ENCODE measurements at regions of chr7 and their contacts with region 1.

Region 1: DNA sequence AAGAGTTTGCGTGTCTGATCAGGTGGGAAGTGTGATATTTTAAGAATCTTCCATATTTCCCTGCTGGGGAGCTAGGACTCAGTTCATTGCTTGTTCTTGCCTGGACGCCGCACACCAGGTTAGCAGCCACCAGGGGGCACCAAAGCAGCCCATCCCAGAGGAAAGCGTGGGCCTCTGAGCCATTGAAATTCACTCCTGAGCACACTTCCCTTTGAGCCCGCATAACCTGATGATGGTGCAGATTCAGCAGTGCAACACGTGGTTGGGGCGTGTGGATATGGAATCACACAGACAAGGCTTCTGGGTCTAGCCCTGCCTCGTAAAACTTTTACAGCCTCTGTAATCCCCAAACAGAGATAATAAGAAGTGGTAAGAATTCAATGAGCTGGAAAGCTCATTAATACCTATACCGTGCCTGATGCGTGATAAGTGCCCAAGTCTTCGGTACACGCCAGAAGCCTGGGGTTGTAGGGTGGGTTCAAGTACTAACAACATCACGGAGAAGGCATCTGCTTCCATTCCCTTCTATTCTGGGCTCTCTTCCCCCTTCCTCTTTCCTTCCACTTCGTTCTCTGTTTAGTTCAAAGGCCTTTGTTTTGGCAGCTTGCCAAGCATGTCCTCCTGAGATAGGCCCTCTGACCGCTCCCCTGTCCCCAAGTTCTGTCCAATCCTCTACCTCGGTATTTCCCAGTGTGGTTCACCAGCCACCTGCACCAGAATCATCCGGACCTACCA is 130.1 kb upstream of the KMT2E start:
- DNase-seq: peak; percentile 43 to 79 (median 58)
- ATAC-seq: peak; percentile 92
- H3K4me3 ChIP-seq: no peak overlapping the region
- H3K4me3 Mint-ChIP-seq: peak overlapping the region in 4 of 10 donors; percentile 3 to 56 (median 34)
- H3K27ac ChIP-seq: no peak overlapping the region
- H3K27ac Mint-ChIP-seq: peak overlapping the region in 2 of 9 donors; percentile 12 to 39
- H3K4me1 ChIP-seq: no peaks in the 10 kb centered on the region
- H3K4me1 Mint-ChIP-seq: peaks cover 0 to 18% (median 5%) of the 10 kb centered on the region in 7 donors
- H3K27me3 ChIP-seq: no peaks in the 10 kb centered on the region
- H3K27me3 Mint-ChIP-seq: peaks cover 0 to 11% (median 0%) of the 10 kb centered on the region in 5 donors

Region 2: GRCh38 chr7:104895522-104896236 is 11.8 kb after region 1 on chr7:
- CTCF ChIA-PET with region 1: interaction called, 14 read pairs
- POLR2A ChIA-PET with region 1: no interaction called
- intact Hi-C with region 1: no loop called
- DNase-seq: no peak
- ATAC-seq: no peak
- H3K4me3 ChIP-seq: no peak overlapping the region
- H3K4me3 Mint-ChIP-seq: no peak overlapping the region
- H3K27ac ChIP-seq: no peak overlapping the region
- H3K27ac Mint-ChIP-seq: peak overlapping the region in 1 of 9 donors; percentile 14
- H3K4me1 ChIP-seq: no peaks in the 10 kb centered on the region
- H3K4me1 Mint-ChIP-seq: peaks cover 4 to 11% (median 7%) of the 10 kb centered on the region in 7 donors
- H3K27me3 ChIP-seq: no peaks in the 10 kb centered on the region
- H3K27me3 Mint-ChIP-seq: peaks cover 0 to 4% (median 0%) of the 10 kb centered on the region in 5 donors

Region 3: DNA sequence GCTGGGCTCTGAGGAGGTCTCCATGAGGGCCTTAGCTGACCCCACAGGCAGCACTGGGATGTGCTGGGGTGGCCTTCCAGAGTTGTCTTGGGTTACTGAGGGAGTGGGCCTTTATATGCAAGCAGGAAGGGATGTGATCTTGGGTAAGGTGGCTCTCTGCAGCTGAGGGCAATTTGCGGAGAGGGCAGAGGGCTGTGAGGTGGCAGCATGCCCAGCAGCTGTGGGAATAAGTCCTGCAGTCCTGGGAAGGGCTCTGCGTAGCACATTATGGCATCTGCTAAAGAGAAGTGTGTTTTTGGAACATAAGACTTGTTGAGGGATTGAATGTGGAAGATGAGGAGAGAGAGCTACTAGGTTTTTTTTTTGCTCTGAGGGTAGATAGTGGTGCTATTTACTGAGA is 30.5 kb after region 1 on chr7:
- CTCF ChIA-PET with region 1: interaction called, 57 read pairs
- POLR2A ChIA-PET with region 1: interaction called, 6 read pairs
- intact Hi-C with region 1: loop called (anchors 1 kb)
- DNase-seq: no peak
- ATAC-seq: no peak
- H3K4me3 ChIP-seq: no peak overlapping the region
- H3K4me3 Mint-ChIP-seq: no peak overlapping the region
- H3K27ac ChIP-seq: no peak overlapping the region
- H3K27ac Mint-ChIP-seq: peak overlapping the region in 1 of 9 donors; percentile 11
- H3K4me1 ChIP-seq: no peaks in the 10 kb centered on the region
- H3K4me1 Mint-ChIP-seq: peaks cover 0 to 3% (median 0%) of the 10 kb centered on the region in 7 donors
- H3K27me3 ChIP-seq: no peaks in the 10 kb centered on the region
- H3K27me3 Mint-ChIP-seq: peaks cover 0 to 13% (median 0%) of the 10 kb centered on the region in 5 donors

Region 4: GRCh38 chr7:105084581-105084980 is 200.7 kb after region 1 on chr7:
- CTCF ChIA-PET with region 1: no interaction called
- POLR2A ChIA-PET with region 1: no interaction called
- intact Hi-C with region 1: no loop called
- DNase-seq: no peak
- ATAC-seq: no peak
- H3K4me3 ChIP-seq: no peak overlapping the region
- H3K4me3 Mint-ChIP-seq: no peak overlapping the region
- H3K27ac ChIP-seq: no peak overlapping the region
- H3K27ac Mint-ChIP-seq: peak overlapping the region in 3 of 9 donors; percentile 42 to 52 (median 46)
- H3K4me1 ChIP-seq: no peaks in the 10 kb centered on the region
- H3K4me1 Mint-ChIP-seq: peaks cover 5 to 29% (median 20%) of the 10 kb centered on the region in 7 donors
- H3K27me3 ChIP-seq: no peaks in the 10 kb centered on the region
- H3K27me3 Mint-ChIP-seq: no peaks in the 10 kb centered on the region

Region 5: DNA sequence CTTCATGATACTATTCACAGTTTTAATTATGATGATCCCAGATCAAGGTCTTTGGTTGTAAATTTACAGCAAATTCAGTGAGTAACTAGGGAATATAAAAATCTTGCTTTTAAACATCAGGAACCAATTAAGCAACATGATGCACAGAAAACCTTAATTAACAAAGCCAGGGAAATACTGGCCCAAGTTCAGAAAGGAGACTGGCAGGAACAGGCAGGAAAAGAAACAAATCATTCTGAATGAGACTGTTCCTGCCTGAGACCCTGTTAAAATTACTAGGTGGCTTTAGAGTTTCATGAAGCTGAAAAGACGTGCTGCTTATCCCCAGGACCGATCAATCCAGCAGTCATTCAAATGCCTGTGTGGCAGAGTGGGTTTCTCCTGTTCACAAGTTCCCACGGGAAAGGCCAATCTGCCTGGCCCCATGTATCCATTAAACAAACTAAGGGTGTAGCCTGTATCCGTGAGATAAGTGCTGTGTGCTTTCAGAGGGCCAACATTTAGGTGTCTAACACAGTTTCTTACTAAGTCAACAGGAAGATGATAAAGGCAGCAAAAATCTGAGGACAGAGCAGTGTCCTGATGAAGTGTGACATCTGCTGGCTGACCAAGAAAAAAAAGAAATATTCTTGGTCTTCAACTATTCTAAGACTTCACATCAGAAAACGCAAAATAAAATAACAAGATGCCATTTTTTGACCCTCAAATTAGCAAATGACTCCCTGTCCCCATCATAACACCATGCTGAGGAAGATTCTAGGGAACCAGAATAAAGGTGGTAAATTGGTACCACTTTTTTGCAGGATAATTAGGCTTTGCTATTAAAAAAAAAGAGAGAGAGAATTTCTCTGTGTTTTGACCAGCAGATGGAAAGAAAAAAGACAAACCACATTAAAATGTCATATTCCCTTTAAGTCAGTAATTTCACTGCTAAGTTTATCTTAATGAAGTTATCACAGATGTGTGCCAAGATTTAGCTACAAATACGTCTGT is 604.0 kb after region 1 on chr7:
- CTCF ChIA-PET with region 1: no interaction called
- POLR2A ChIA-PET with region 1: no interaction called
- intact Hi-C with region 1: loop called in 1 of 2 experiments (anchors 1 kb)
- DNase-seq: peak in 4 of 9 donors; percentile 4 to 31 (median 19)
- ATAC-seq: no peak
- H3K4me3 ChIP-seq: no peak overlapping the region
- H3K4me3 Mint-ChIP-seq: no peak overlapping the region
- H3K27ac ChIP-seq: no peak overlapping the region
- H3K27ac Mint-ChIP-seq: peak overlapping the region in 1 of 9 donors; percentile 20
- H3K4me1 ChIP-seq: no peaks in the 10 kb centered on the region
- H3K4me1 Mint-ChIP-seq: peaks cover 0 to 8% (median 0%) of the 10 kb centered on the region in 7 donors
- H3K27me3 ChIP-seq: no peaks in the 10 kb centered on the region
- H3K27me3 Mint-ChIP-seq: no peaks in the 10 kb centered on the region

Region 6: GRCh38 chr7:105531792-105532671 is 648.1 kb after region 1 on chr7 and contains the start of gene RINT1:
- CTCF ChIA-PET with region 1: no interaction called
- POLR2A ChIA-PET with region 1: no interaction called
- intact Hi-C with region 1: no loop called
- DNase-seq: peak; percentile 72 to 90 (median 81)
- ATAC-seq: peak; percentile 97
- H3K4me3 ChIP-seq: peak within 1 kb of the TSS; percentile 86
- H3K4me3 Mint-ChIP-seq: peak within 1 kb of the TSS; percentile 87 to 99 (median 93)
- H3K27ac ChIP-seq: peak within 1 kb of the TSS; percentile 83
- H3K27ac Mint-ChIP-seq: peak within 1 kb of the TSS; percentile 87 to 98 (median 92)
- H3K4me1 ChIP-seq: peaks cover 13 to 18% of the 10 kb centered on the region in 2 donors
- H3K4me1 Mint-ChIP-seq: peaks cover 21 to 59% (median 38%) of the 10 kb centered on the region in 7 donors
- H3K27me3 ChIP-seq: no peaks in the 10 kb centered on the region
- H3K27me3 Mint-ChIP-seq: no peaks in the 10 kb centered on the region
- total RNA-seq, gene RINT1: 23.0 to 31.8 (median 26.0) TPM

Region 7: DNA sequence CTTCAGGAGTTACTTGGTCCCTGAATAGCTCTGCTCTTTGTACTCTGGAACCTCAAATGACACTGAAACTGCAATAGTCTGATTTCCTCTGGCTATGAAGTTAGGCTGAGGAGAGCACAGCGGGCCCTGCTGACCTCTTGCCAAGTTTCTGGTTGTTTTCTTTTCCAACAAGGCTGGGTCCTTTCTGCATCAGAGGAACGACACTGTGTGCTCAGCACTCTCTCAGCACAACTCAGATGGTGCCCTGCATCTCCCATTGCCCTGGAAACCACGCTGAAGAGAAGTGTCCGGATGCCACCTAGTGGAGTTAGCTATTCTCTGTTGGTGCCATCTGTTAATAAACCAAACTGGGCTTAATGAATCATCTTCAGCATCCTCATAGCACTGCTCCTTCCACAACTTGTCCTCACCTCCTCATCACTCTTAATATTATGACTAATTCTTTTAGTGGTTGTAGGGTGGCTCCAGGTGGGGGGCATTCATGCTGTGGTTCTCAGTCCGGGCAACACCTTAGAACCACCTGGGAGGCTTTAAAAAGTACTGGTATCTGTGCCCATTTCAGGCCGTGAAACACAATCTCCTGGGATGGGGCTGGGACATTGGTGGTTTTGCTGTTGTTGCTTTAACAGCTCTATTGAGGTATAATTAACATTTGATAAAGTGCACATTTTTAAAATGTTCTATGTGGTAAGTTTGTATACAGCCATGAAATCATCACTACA is 705.6 kb after region 1 on chr7:
- CTCF ChIA-PET with region 1: interaction called, 7 read pairs
- POLR2A ChIA-PET with region 1: no interaction called
- intact Hi-C with region 1: loop called in 1 of 2 experiments (anchors 10 kb)
- DNase-seq: peak in 8 of 9 donors; percentile 16 to 61 (median 42)
- ATAC-seq: peak; percentile 87
- H3K4me3 ChIP-seq: no peak overlapping the region
- H3K4me3 Mint-ChIP-seq: no peak overlapping the region
- H3K27ac ChIP-seq: no peak overlapping the region
- H3K27ac Mint-ChIP-seq: peak overlapping the region in 3 of 9 donors; percentile 4 to 70 (median 69)
- H3K4me1 ChIP-seq: no peaks in the 10 kb centered on the region
- H3K4me1 Mint-ChIP-seq: peaks cover 0 to 17% (median 4%) of the 10 kb centered on the region in 7 donors
- H3K27me3 ChIP-seq: no peaks in the 10 kb centered on the region
- H3K27me3 Mint-ChIP-seq: peaks cover 0 to 9% (median 0%) of the 10 kb centered on the region in 5 donors

Measured in naive thymus-derived CD4-positive, alpha-beta T cell (primary cell).